Activated CD4-positive, alpha-beta T cell treated with anti-CD3 and anti-CD28 coated beads for 36 hours (primary cell): ENCODE measurements at regions of chr12 and their contacts with region 1.

Region 1: DNA sequence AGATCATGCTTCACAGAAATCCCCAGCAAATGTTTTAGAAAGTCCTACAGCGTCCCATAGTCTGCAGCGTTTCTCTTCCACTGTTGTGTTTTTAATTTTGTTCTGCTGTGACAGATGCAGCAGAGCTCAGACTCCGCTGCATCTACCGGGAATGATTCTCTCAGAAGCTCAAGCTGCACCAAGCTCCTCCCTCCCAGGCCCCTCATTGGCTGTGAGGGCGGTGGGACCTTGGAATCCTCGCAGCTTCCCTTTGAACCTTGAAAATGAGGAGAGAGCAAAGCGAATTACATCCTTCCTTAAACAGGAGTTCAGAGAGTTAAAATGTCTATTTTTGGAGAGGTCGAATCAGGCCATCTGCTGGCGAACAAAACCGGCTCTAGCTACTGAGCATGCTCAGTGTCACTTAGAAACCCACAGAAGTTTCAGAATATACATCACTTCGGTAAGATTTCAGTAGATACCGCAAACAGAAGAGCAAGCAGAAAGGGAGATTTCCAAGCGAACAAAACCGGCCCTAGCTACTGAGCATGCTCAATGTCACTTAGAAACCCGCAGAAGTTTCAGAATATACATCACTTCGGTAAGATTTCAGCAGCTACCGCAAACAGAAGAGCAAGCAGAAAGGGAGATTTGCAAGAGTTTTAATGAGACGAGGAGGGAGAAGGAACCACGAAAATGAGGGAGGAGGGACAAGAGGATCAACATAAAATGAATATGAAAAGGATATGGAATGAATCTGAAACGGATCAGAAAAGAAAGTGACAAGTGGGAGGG is at the start of gene ABCD2:
- DNase-seq: peak; percentile 83
- ATAC-seq: peak; percentile 71
- H3K4me3 Mint-ChIP-seq: no peak within 1 kb of the TSS
- H3K27ac Mint-ChIP-seq: no peak within 1 kb of the TSS
- H3K4me1 Mint-ChIP-seq: peaks cover 58% of the 10 kb centered on the region
- H3K27me3 Mint-ChIP-seq: no peaks in the 10 kb centered on the region
- total RNA-seq, gene ABCD2: 2.1 to 2.3 TPM

Region 2: GRCh38 chr12:39467432-39467870 is 152.4 kb before region 1 on chr12:
- CTCF ChIA-PET with region 1: no interaction called
- POLR2A ChIA-PET with region 1: no interaction called
- intact Hi-C with region 1: no loop called
- DNase-seq: peak; percentile 13
- ATAC-seq: peak; percentile 92
- H3K4me3 Mint-ChIP-seq: no peak overlapping the region
- H3K27ac Mint-ChIP-seq: no peak overlapping the region
- H3K4me1 Mint-ChIP-seq: peaks cover 15% of the 10 kb centered on the region
- H3K27me3 Mint-ChIP-seq: no peaks in the 10 kb centered on the region

Region 3: DNA sequence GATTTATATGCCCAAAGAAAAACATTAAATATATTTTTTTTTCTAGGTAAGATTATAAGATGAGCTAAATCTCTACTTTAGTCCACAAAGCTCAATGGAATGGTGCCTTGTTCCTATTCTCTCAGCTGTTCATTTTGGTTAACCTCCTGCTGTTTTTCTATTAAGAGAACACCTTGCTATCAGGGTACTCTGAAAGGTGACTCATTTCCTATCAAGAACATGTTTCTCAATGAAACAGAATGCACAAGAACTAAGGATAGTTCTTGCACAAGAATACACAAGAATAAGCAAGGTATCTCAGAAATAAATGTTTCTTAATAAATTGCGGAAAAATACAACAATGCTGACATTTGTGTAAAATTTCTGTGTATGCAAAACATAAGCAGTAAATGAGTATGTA is 14.3 kb before region 1 on chr12:
- CTCF ChIA-PET with region 1: interaction called, 10 read pairs
- POLR2A ChIA-PET with region 1: no interaction called
- intact Hi-C with region 1: no loop called
- DNase-seq: no peak
- ATAC-seq: no peak
- H3K4me3 Mint-ChIP-seq: no peak overlapping the region
- H3K27ac Mint-ChIP-seq: no peak overlapping the region
- H3K4me1 Mint-ChIP-seq: peaks cover 8% of the 10 kb centered on the region
- H3K27me3 Mint-ChIP-seq: no peaks in the 10 kb centered on the region

Region 4: DNA sequence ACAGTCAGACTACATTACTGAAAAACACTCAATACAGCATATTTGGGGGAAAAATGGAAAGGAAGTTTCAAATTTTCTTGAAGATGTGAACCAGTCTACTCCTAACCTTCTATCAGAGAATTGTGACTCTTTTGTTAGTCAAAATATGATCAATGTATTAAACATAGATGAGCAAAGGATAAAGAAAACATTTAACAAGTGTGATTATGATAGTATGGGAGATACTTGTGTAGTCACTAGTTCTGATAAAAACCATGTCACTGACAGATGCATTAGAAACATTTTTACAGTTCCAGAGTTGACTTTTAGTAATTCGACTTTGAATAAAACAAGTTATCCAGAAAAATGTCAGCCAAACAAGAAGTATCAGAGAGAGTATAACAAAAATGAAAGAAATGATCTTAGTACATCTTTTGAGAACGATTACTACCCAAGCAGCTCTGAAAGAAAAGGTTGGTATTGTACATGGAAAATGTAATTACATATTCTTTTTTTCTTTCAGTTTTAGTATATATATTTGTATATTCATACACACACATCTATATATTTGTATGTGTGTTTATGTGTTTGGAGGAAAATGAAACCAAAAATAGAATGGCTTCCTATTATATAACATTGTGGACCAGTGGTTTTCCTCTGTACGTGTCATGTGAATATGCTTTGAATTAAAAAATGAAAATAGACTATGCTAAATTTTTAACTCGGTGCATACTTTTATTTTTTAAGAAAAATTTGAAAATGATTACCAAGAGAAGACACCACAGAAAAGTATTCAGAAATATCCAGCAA is 63.0 kb after region 1 on chr12:
- CTCF ChIA-PET with region 1: no interaction called
- POLR2A ChIA-PET with region 1: interaction called, 3 read pairs
- intact Hi-C with region 1: loop called (anchors 1 to 2 kb)
- DNase-seq: no peak
- ATAC-seq: peak; percentile 65
- H3K4me3 Mint-ChIP-seq: peak overlapping the region; percentile 39
- H3K27ac Mint-ChIP-seq: peak overlapping the region; percentile 80
- H3K4me1 Mint-ChIP-seq: peaks cover 22% of the 10 kb centered on the region
- H3K27me3 Mint-ChIP-seq: no peaks in the 10 kb centered on the region